ENCODE measurements at regions of chr5 and their contacts with region 1.

Region 1: GRCh38 chr5:25020454-25020853 is 375.7 kb upstream of the CDH10 start:
- DNase-seq: peak in 1 of 2 experiments; percentile 19
- H3K4me3 ChIP-seq: no peak overlapping the region
- H3K27ac ChIP-seq: no peak overlapping the region
- H3K4me1 ChIP-seq: peaks cover 3 to 5% (median 3%) of the 10 kb centered on the region in 4 experiments; a peak in 6 of 7 replicates
- H3K27me3 ChIP-seq: no peaks in the 10 kb centered on the region
- CTCF ChIP-seq: no peak
- EP300 ChIP-seq: no peak
- POLR2A ChIP-seq: no peak
- RAD21 ChIP-seq: no peak

Region 2: GRCh38 chr5:25006737-25007302 is 13.6 kb before region 1 on chr5:
- CTCF ChIA-PET with region 1: interaction called, 12 read pairs
- POLR2A ChIA-PET with region 1: interaction called, 3 read pairs
- DNase-seq: peak in 1 of 2 experiments; percentile 2
- H3K4me3 ChIP-seq: no peak overlapping the region
- H3K27ac ChIP-seq: no peak overlapping the region
- H3K4me1 ChIP-seq: no peaks in the 10 kb centered on the region
- H3K27me3 ChIP-seq: no peaks in the 10 kb centered on the region
- CTCF ChIP-seq: peak in 2 of 3 experiments; percentile 47 to 59; a peak in 2 of 4 replicates
- EP300 ChIP-seq: no peak
- POLR2A ChIP-seq: no peak
- RAD21 ChIP-seq: peak; percentile 83 to 86